ENCODE measurements at regions of chr17 and their contacts with region 1.

Region 1: GRCh38 chr17:64145757-64146417 is 15.9 kb upstream of the ERN1 start:
- DNase-seq: peak; percentile 88 to 99 (median 95)
- ATAC-seq: peak; percentile 88
- H3K4me3 ChIP-seq: peak overlapping the region; percentile 74 to 95
- H3K4me3 Mint-ChIP-seq: no peak overlapping the region
- H3K27ac ChIP-seq: peak overlapping the region; percentile 89 to 91
- H3K27ac Mint-ChIP-seq: no peak overlapping the region
- H3K4me1 ChIP-seq: peaks cover 16% of the 10 kb centered on the region
- H3K4me1 Mint-ChIP-seq: peaks cover 27% of the 10 kb centered on the region
- H3K27me3 ChIP-seq: no peaks in the 10 kb centered on the region
- H3K27me3 Mint-ChIP-seq: no peaks in the 10 kb centered on the region
- CTCF ChIP-seq: no peak

Region 2: GRCh38 chr17:63773381-63774140 is 372.3 kb before region 1 on chr17 and contains the start of gene CCDC47:
- CTCF ChIA-PET with region 1: no interaction called
- POLR2A ChIA-PET with region 1: interaction called, 8 read pairs
- intact Hi-C with region 1: loop called in 1 of 2 experiments (anchors 1 kb)
- DNase-seq: peak; percentile 95 to 100 (median 97)
- ATAC-seq: peak; percentile 79
- H3K4me3 ChIP-seq: peak within 1 kb of the TSS; percentile 84 to 95
- H3K4me3 Mint-ChIP-seq: peak within 1 kb of the TSS; percentile 97
- H3K27ac ChIP-seq: peak within 1 kb of the TSS; percentile 86 to 97
- H3K27ac Mint-ChIP-seq: peak within 1 kb of the TSS; percentile 98
- H3K4me1 ChIP-seq: peaks cover 41% of the 10 kb centered on the region
- H3K4me1 Mint-ChIP-seq: peaks cover 60% of the 10 kb centered on the region
- H3K27me3 ChIP-seq: no peaks in the 10 kb centered on the region
- H3K27me3 Mint-ChIP-seq: no peaks in the 10 kb centered on the region
- CTCF ChIP-seq: no peak
- total RNA-seq, gene CCDC47: 33.1 to 34.6 TPM

Region 3: DNA sequence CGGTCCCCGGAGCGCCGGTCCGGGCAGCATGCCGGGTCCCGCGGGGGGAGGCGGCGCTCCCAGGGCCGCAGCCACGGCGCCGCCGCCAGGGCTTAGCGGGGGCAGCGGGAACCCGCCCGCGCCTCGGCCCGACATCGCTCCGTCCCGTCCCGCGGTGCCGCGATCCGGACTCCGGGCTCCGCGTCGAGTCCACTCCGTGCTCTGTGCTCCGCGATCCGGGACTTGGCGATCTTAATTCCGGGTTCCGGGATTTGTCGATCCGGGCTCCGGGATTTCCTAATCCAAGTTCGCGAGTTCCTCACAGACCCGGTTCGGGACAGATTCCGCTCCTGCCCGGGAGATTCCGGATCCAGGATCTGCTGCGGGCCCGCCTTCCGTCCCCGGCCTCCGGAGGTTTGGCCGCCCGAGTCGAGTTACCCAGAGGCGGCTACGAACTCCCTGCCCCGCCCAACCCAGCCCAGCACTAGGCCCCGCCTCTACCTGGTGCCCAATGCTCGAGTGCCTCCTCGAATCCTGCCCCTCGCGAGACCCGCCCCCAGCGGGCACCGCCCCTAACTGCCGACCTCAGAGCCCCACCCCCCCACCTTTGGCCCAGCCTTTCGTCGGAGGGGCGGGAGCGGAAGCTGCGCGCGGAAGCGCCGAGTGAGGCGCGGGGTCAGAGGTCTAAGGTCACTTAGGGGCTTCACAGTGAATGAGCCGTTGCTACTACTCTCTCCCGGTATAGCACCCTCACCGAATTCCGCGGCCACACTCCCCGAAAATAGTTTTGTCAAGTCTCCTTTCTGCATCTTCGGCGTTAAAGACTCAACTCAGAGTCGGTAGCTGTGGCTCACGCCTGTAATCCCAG is 303.1 kb before region 1 on chr17 and contains the start of gene SMARCD2:
- CTCF ChIA-PET with region 1: no interaction called
- POLR2A ChIA-PET with region 1: interaction called, 4 read pairs
- intact Hi-C with region 1: loop called in 1 of 2 experiments (anchors 2 kb)
- DNase-seq: peak; percentile 99
- ATAC-seq: peak; percentile 91
- H3K4me3 ChIP-seq: peak within 1 kb of the TSS; percentile 86 to 95
- H3K4me3 Mint-ChIP-seq: peak within 1 kb of the TSS; percentile 92
- H3K27ac ChIP-seq: peak within 1 kb of the TSS; percentile 88 to 95
- H3K27ac Mint-ChIP-seq: peak within 1 kb of the TSS; percentile 92
- H3K4me1 ChIP-seq: peaks cover 43% of the 10 kb centered on the region
- H3K4me1 Mint-ChIP-seq: peaks cover 30% of the 10 kb centered on the region
- H3K27me3 ChIP-seq: no peaks in the 10 kb centered on the region
- H3K27me3 Mint-ChIP-seq: no peaks in the 10 kb centered on the region
- CTCF ChIP-seq: no peak
- total RNA-seq, gene SMARCD2: 121 TPM

Region 4: DNA sequence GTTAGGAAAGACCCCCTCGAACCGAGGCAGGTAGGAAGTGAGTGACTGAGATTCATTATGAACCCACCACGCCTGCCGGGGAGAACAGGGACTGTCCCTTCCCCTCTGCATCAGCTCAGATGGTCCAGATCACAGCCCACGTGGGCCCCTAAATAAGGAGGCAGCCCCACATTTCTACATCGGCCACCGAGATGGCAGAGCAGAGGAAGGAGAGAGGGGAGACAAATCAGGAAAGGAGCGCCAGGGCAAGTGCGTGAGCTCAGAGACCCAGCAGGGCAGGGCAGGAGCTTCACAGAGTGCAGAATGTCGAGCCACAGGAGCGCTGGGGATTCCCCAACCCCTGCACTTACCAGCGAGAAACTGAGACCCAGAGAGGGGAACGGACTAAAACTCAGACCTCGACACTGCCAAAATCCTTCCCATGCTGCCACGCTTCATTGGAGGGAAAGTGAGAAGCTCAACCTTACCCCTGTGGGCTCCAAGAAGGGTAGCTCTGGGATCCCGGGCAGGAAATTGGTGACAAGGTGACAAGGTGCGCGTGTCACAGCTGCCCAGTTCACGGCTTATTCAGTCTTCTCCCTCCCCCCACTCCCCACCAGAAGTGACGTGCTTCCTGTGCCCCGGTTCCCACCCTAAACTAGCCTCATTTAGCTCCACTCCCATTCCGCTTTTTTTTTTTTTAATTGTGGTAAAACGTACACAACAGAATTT is 125.7 kb before region 1 on chr17 and contains the start of gene ICAM2:
- CTCF ChIA-PET with region 1: interaction called, 10 read pairs
- POLR2A ChIA-PET with region 1: interaction called, 59 read pairs
- intact Hi-C with region 1: loop called in 1 of 2 experiments (anchors 1 kb)
- DNase-seq: peak; percentile 83 to 99 (median 90)
- ATAC-seq: peak; percentile 73
- H3K4me3 ChIP-seq: peak within 1 kb of the TSS; percentile 78 to 87
- H3K4me3 Mint-ChIP-seq: peak within 1 kb of the TSS; percentile 99
- H3K27ac ChIP-seq: peak within 1 kb of the TSS; percentile 95 to 99
- H3K27ac Mint-ChIP-seq: peak within 1 kb of the TSS; percentile 100
- H3K4me1 ChIP-seq: peaks cover 72% of the 10 kb centered on the region
- H3K4me1 Mint-ChIP-seq: peaks cover 79% of the 10 kb centered on the region
- H3K27me3 ChIP-seq: no peaks in the 10 kb centered on the region
- H3K27me3 Mint-ChIP-seq: no peaks in the 10 kb centered on the region
- CTCF ChIP-seq: no peak
- total RNA-seq, gene ICAM2: 38.0 to 38.7 TPM

Region 5: GRCh38 chr17:64056269-64057005 is 89.5 kb before region 1 on chr17:
- CTCF ChIA-PET with region 1: no interaction called
- POLR2A ChIA-PET with region 1: interaction called, 28 read pairs
- intact Hi-C with region 1: no loop called
- DNase-seq: peak in 2 of 9 experiments; percentile 22 to 44
- ATAC-seq: peak; percentile 39
- H3K4me3 ChIP-seq: no peak overlapping the region
- H3K4me3 Mint-ChIP-seq: no peak overlapping the region
- H3K27ac ChIP-seq: peak overlapping the region; percentile 12 to 58
- H3K27ac Mint-ChIP-seq: peak overlapping the region; percentile 78
- H3K4me1 ChIP-seq: peaks cover 18% of the 10 kb centered on the region
- H3K4me1 Mint-ChIP-seq: peaks cover 41% of the 10 kb centered on the region
- H3K27me3 ChIP-seq: no peaks in the 10 kb centered on the region
- H3K27me3 Mint-ChIP-seq: no peaks in the 10 kb centered on the region
- CTCF ChIP-seq: no peak

Region 6: DNA sequence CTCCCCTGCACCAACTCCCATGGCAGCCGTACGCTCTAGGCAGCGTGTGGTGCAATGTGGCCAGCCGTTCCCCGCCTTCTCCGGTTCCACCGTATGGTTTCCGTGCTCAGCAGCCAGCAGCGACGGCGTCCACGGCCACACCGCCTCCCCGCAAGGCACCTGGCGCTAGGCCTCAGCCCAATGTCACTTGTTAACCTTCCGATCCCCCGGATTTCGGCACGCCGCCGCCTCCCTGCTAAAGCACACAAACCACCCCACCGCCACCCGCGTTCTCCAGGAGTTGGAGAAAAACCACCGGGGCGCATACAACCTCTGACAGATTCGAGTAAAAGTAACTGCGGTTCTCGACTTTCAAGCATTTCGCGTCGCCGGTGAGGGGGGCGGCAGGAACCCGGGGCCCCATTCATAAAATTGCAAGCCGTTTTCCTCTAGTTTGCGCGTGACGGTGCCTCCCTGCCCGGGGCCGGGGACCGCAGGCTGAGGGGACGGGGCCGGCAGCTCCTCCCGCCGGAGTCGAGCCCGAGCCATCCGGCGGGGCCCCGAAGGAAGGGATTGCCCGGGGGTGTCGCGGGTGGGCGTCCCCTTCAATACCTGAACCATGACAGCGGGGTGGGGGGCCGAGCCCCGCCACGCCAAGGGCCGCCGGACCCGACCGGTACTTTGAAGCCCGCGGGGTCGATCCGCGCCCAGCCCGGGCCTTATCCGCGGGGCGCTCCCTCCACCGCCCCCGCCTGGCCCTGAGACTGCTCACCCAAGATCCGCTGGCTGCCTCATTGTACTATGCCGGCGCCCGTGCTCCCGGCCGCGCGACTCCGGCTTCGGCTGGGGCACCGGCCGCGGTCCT is 116.8 kb after region 1 on chr17 and contains the start of gene TEX2:
- CTCF ChIA-PET with region 1: no interaction called
- POLR2A ChIA-PET with region 1: interaction called, 20 read pairs
- intact Hi-C with region 1: loop called (anchors 1 kb)
- DNase-seq: peak; percentile 39 to 87 (median 67)
- ATAC-seq: peak; percentile 32
- H3K4me3 ChIP-seq: peak within 1 kb of the TSS; percentile 64 to 82
- H3K4me3 Mint-ChIP-seq: peak within 1 kb of the TSS; percentile 89
- H3K27ac ChIP-seq: peak within 1 kb of the TSS; percentile 67 to 74
- H3K27ac Mint-ChIP-seq: peak within 1 kb of the TSS; percentile 93
- H3K4me1 ChIP-seq: peaks cover 21% of the 10 kb centered on the region
- H3K4me1 Mint-ChIP-seq: peaks cover 37% of the 10 kb centered on the region
- H3K27me3 ChIP-seq: no peaks in the 10 kb centered on the region
- H3K27me3 Mint-ChIP-seq: no peaks in the 10 kb centered on the region
- CTCF ChIP-seq: no peak
- total RNA-seq, gene TEX2: 4.8 to 5.6 TPM

Region 7: GRCh38 chr17:64661976-64662773 is 516.3 kb after region 1 on chr17 and contains the start of gene SMURF2:
- CTCF ChIA-PET with region 1: no interaction called
- POLR2A ChIA-PET with region 1: no interaction called
- intact Hi-C with region 1: loop called in 1 of 2 experiments (anchors 10 kb)
- DNase-seq: peak; percentile 63 to 90 (median 80)
- ATAC-seq: peak; percentile 90
- H3K4me3 ChIP-seq: peak within 1 kb of the TSS; percentile 71 to 79
- H3K4me3 Mint-ChIP-seq: peak within 1 kb of the TSS; percentile 98
- H3K27ac ChIP-seq: peak within 1 kb of the TSS; percentile 56 to 63
- H3K27ac Mint-ChIP-seq: peak within 1 kb of the TSS; percentile 95
- H3K4me1 ChIP-seq: peaks cover 31% of the 10 kb centered on the region
- H3K4me1 Mint-ChIP-seq: peaks cover 44% of the 10 kb centered on the region
- H3K27me3 ChIP-seq: no peaks in the 10 kb centered on the region
- H3K27me3 Mint-ChIP-seq: no peaks in the 10 kb centered on the region
- CTCF ChIP-seq: no peak
- total RNA-seq, gene SMURF2: 27.3 to 28.1 TPM